Activated T-helper 1 cell treated with anti-CD3 and anti-CD28 coated beads, Interleukin-12 subunit alpha, Interleukin-12 subunit beta, Interleukin-2, Interleukin-4 antibody, amounts not matched to agents 30 ng/mL and 10 ng/mL and 1 ng/mL, durations not matched to agents 14 hours and 24 hours and 36 hours (primary cell): ENCODE measurements at regions of chr5 and their contacts with region 1.

Region 1: GRCh38 chr5:90434116-90434714 is 24.7 kb upstream of the CETN3 start:
- DNase-seq: peak; percentile 10
- H3K4me3 Mint-ChIP-seq: no peak overlapping the region
- H3K27ac Mint-ChIP-seq: no peak overlapping the region
- H3K4me1 Mint-ChIP-seq: no peaks in the 10 kb centered on the region
- H3K27me3 Mint-ChIP-seq: peaks cover 21% of the 10 kb centered on the region

Region 2: DNA sequence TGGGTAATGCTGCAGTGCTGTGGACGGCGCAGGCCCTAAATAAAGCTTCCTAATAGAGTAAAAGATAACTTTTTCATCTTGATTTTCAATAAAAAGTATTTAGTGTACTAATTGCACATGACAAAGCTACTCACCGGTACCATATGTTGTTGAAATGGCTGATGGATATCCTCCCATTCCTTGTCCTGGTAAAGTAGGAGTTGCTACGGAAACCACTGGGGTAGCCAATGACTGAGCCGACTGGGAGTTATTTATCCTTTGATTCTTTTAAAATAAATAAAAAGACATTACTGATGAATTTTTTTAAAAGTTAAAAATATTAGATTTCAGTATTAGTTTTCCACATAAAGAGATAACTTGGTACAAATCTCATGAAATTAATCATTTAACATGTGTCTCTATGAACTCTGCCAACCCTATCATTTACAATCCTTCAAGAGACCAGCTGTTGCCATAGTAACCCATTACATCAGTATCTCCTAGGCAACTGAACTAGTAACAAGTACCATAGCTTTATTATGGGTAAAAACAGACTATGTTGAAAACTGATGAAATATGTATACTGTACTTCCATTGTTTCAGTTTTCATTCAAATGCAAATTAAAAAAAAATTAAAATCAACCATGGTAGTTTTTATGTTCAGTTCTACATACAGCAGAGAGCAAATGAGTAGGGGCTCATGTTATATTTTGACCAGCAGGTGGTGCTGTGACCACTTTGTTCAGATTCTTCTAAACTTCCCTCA is 1705.0 kb before region 1 on chr5:
- intact Hi-C with region 1: loop called (anchors 5 kb)
- DNase-seq: peak; percentile 14
- H3K4me3 Mint-ChIP-seq: no peak overlapping the region
- H3K27ac Mint-ChIP-seq: no peak overlapping the region
- H3K4me1 Mint-ChIP-seq: peaks cover 4% of the 10 kb centered on the region
- H3K27me3 Mint-ChIP-seq: peaks cover 9% of the 10 kb centered on the region

Region 3: DNA sequence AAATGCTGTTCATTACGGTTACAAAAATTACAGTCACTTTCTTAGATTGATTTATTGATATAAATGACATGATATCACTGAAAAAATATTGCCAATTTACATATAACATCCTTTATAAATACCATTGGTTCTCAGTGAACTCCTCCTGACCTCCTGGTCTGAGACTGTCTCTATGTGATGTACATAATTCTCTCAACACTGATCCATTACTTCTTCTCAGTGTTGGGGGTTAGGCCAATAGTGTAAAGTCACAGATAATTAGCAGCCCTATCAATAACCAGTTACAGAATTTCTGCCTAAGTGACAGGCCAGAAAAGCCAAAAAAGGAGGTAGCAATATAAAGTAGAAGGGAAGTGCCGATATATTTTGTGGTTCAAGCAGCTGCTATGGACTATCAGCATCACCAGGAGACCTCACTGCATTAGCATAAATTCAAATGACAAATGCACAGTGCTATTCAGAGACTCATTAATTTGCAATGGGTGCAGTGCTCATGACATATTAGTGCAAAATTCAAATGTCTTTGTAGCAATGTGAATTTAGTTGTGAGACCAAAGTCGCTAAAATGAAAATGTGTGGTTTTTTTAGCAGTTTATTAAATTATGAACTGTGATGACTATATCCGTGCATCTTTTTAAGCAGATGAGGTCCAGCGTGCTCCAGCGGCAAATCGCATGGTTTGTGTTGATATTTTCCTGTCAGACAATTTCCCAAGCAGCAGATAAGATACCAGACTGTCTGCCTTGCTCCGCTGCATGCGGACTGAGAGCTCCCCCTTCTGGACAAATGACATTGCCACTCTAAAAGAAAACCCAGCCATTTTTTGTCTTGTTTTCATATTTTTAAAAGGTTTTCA is 169.3 kb before region 1 on chr5:
- intact Hi-C with region 1: loop called (anchors 5 kb)
- DNase-seq: peak; percentile 6
- H3K4me3 Mint-ChIP-seq: no peak overlapping the region
- H3K27ac Mint-ChIP-seq: no peak overlapping the region
- H3K4me1 Mint-ChIP-seq: no peaks in the 10 kb centered on the region
- H3K27me3 Mint-ChIP-seq: peaks cover 2% of the 10 kb centered on the region

Region 4: GRCh38 chr5:90409318-90410177 is 24.7 kb before region 1 on chr5 and contains the start of gene CETN3:
- intact Hi-C with region 1: loop called (anchors 1 kb)
- DNase-seq: peak; percentile 86
- H3K4me3 Mint-ChIP-seq: no peak within 1 kb of the TSS
- H3K27ac Mint-ChIP-seq: no peak within 1 kb of the TSS
- H3K4me1 Mint-ChIP-seq: peaks cover 21% of the 10 kb centered on the region
- H3K27me3 Mint-ChIP-seq: peaks cover 3% of the 10 kb centered on the region
- total RNA-seq, gene CETN3: 36.2 and 39.8 TPM in 2 replicates

Region 5: DNA sequence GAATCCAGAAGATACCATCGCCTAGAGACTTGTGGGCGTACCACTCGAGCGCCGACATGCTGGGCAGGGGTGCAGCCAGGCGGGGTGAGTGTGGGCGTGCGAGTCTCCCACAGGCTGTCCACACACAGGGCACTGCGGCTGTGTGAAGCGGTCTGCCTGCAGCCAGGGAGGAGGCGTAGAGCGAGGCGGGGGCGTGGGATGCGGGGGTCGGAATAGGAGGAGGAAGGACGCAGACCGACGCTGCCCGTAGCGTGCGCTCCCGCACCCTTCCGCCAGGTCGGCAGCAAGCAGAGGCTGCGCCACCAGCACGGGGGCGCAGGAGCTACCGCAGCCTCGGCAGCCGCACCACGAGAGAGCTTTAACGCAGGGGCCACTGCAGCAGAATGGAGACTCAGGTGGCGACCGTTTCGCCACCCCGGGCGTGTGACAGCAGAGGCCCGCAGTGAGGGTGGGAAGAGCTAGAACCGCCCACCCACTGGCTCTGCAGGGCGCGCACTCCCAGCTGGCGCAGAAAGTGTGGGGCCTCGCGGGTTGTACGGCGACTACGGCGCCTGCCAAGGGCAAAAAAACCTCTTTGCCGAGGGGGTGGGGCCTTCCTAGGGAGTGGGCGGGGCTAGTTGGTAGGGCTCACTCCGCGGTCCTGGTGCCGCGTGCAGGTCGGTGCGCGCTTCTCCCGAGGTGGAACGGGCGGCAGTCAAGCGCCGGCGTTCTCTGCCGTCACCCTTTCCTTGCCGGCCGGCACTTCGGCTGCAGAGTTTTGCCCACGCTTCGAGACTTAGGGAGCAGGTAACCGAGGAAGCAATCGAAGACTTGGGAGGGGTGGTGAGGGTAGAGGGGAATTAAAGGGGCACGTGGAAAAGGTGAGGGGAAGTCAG is 40.3 kb after region 1 on chr5 and contains the starts of genes MBLAC2 and POLR3G:
- intact Hi-C with region 1: loop called (anchors 1 kb)
- DNase-seq: peak; percentile 87
- H3K4me3 Mint-ChIP-seq: peak within 1 kb of the TSS; percentile 98
- H3K27ac Mint-ChIP-seq: peak within 1 kb of the TSS; percentile 97
- H3K4me1 Mint-ChIP-seq: peaks cover 44% of the 10 kb centered on the region
- H3K27me3 Mint-ChIP-seq: no peaks in the 10 kb centered on the region
- total RNA-seq, gene MBLAC2: 5.0 and 5.7 TPM in 2 replicates
- total RNA-seq, gene POLR3G: 18.4 and 22.1 TPM in 2 replicates

Region 6: DNA sequence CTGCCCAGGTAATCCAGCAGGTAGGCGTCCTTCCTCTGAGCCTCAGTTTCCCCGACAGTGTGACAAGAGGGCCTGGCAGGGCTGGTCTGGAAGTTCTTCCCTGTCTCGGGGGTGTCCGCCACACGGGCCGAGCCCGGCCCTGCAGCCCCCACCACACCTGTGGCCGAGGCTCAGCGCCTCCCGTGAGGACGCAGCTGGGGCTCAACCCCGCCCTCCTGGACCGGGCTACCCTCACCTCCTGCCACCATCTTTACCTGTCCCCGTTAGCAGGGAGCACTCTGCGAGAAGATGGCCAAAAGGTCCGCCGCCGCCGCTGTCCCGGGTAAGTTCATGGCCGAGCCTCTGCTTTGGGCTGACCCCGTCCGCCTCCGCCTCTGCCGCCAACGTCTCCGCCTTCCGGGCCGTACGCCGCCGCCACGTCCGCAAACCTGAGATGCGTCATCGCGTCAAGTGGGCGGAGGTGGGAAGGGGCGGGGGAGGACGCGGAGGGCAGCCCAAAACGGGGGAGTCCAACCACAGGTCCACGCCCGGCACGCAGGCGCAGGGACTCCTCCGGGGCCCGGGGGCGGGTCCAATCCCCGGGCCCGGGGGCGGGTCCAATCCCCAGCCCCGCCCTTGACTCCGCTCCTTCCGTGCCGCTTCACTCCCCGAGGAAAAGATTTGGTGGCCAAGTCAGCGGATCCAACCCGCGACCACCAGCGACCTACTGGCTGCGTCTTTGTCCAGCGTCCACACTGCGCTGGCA is 95.2 kb after region 1 on chr5 and contains the start of gene LYSMD3:
- intact Hi-C with region 1: loop called (anchors 1 kb)
- DNase-seq: peak; percentile 94
- H3K4me3 Mint-ChIP-seq: peak within 1 kb of the TSS; percentile 99
- H3K27ac Mint-ChIP-seq: peak within 1 kb of the TSS; percentile 98
- H3K4me1 Mint-ChIP-seq: peaks cover 42% of the 10 kb centered on the region
- H3K27me3 Mint-ChIP-seq: peaks cover 19% of the 10 kb centered on the region
- total RNA-seq, gene LYSMD3: 12.3 and 13.6 TPM in 2 replicates

Region 7: GRCh38 chr5:90606539-90606938 is 172.3 kb after region 1 on chr5:
- intact Hi-C with region 1: loop called (anchors 1 kb)
- DNase-seq: no peak
- H3K4me3 Mint-ChIP-seq: no peak overlapping the region
- H3K27ac Mint-ChIP-seq: no peak overlapping the region
- H3K4me1 Mint-ChIP-seq: no peaks in the 10 kb centered on the region
- H3K27me3 Mint-ChIP-seq: peaks cover 2% of the 10 kb centered on the region